CD4-positive, alpha-beta memory T cell (primary cell): ENCODE measurements at regions of chr16 and their contacts with region 1.

Region 1: GRCh38 chr16:70345840-70346239 is 863 bp upstream of the DDX19A start:
- DNase-seq: no peak
- H3K4me3 ChIP-seq: peak overlapping the region in 1 of 2 donors; percentile 93
- H3K4me3 Mint-ChIP-seq: peak overlapping the region; percentile 81 to 96 (median 94)
- H3K27ac ChIP-seq: peak overlapping the region; percentile 87
- H3K27ac Mint-ChIP-seq: peak overlapping the region; percentile 91 to 99 (median 99)
- H3K4me1 ChIP-seq: peaks cover 24% of the 10 kb centered on the region
- H3K4me1 Mint-ChIP-seq: peaks cover 16 to 44% (median 23%) of the 10 kb centered on the region in 4 donors
- H3K27me3 ChIP-seq: no peaks in the 10 kb centered on the region
- H3K27me3 Mint-ChIP-seq: no peaks in the 10 kb centered on the region

Region 2: DNA sequence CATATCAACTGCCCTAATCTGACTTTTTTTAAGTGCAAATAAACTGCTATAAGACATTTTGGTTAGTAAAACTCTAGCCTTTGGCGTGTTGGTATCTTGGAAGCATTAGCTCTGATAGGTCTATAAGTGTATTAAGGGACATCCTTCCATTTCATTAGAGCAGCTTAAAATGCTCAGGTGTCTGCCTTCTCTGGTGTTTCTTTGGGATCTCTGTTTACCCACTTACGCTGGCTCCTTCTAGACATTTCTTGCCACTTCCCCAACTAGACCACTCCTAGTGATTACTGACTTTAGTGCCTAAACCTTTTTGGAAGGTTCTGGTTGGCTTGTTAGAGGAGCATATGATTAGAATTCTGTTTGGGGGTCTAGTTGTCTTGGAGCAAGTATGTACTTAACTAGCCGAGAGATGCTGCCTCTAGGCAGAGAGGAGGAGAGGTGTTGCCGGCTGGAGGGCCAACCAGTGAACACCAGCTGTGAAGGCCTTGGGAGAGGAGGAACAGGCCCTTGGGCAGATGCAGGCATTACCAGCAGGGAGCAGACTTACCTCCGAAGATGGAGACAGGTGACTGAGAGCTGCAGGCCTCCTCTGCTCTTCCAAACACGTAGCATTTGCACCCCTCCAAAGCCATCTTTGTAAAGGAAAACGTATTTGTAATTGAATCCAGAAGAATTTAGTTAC is 187.4 kb before region 1 on chr16:
- CTCF ChIA-PET with region 1: no interaction called
- POLR2A ChIA-PET with region 1: no interaction called
- intact Hi-C with region 1: no loop called
- DNase-seq: no peak
- H3K4me3 ChIP-seq: no peak overlapping the region
- H3K4me3 Mint-ChIP-seq: no peak overlapping the region
- H3K27ac ChIP-seq: no peak overlapping the region
- H3K27ac Mint-ChIP-seq: no peak overlapping the region
- H3K4me1 ChIP-seq: no peaks in the 10 kb centered on the region
- H3K4me1 Mint-ChIP-seq: no peaks in the 10 kb centered on the region
- H3K27me3 ChIP-seq: no peaks in the 10 kb centered on the region
- H3K27me3 Mint-ChIP-seq: no peaks in the 10 kb centered on the region

Region 3: DNA sequence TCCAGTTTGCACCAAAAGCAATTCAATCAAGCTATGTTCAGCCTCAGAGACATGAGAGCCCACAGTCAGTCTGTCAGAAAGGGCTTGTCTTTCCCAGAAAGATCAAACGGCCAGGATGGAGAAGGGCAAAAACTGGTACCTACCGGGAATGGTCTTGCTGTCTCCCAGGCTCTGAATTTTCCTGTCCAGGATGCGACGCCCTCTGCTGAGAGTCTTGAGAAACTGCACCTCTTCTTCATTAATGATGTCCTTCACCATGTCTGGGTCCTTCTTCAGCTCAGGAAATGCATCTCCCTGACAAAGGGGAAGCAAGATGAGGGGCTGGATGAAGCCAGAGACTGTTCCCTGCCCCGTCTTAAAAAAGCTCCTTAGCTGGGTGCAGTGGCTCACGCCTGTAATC is 78.3 kb before region 1 on chr16:
- CTCF ChIA-PET with region 1: no interaction called
- POLR2A ChIA-PET with region 1: no interaction called
- intact Hi-C with region 1: no loop called
- DNase-seq: peak in 3 of 5 donors; percentile 26 to 31 (median 29)
- H3K4me3 ChIP-seq: no peak overlapping the region
- H3K4me3 Mint-ChIP-seq: no peak overlapping the region
- H3K27ac ChIP-seq: no peak overlapping the region
- H3K27ac Mint-ChIP-seq: peak overlapping the region in 1 of 7 donors; percentile 72
- H3K4me1 ChIP-seq: no peaks in the 10 kb centered on the region
- H3K4me1 Mint-ChIP-seq: peaks cover 0 to 1% (median 0%) of the 10 kb centered on the region in 4 donors
- H3K27me3 ChIP-seq: no peaks in the 10 kb centered on the region
- H3K27me3 Mint-ChIP-seq: no peaks in the 10 kb centered on the region

Region 4: GRCh38 chr16:70289229-70290098 is 56.4 kb before region 1 on chr16 and contains the start of gene AARS1:
- CTCF ChIA-PET with region 1: no interaction called
- POLR2A ChIA-PET with region 1: interaction called, 23 read pairs
- intact Hi-C with region 1: loop called (anchors 1 kb)
- DNase-seq: peak; percentile 95 to 97 (median 96)
- H3K4me3 ChIP-seq: peak within 1 kb of the TSS; percentile 49 to 76
- H3K4me3 Mint-ChIP-seq: peak within 1 kb of the TSS; percentile 96 to 99 (median 98)
- H3K27ac ChIP-seq: peak within 1 kb of the TSS; percentile 87
- H3K27ac Mint-ChIP-seq: peak within 1 kb of the TSS; percentile 90 to 99 (median 98)
- H3K4me1 ChIP-seq: peaks cover 10% of the 10 kb centered on the region
- H3K4me1 Mint-ChIP-seq: peaks cover 7 to 27% (median 20%) of the 10 kb centered on the region in 4 donors
- H3K27me3 ChIP-seq: no peaks in the 10 kb centered on the region
- H3K27me3 Mint-ChIP-seq: no peaks in the 10 kb centered on the region
- total RNA-seq, gene AARS1: 102 to 103 TPM

Region 5: GRCh38 chr16:70298988-70299938 is 46.6 kb before region 1 on chr16 and contains the start of gene DDX19B:
- CTCF ChIA-PET with region 1: no interaction called
- POLR2A ChIA-PET with region 1: interaction called, 62 read pairs
- intact Hi-C with region 1: loop called (anchors 1 kb)
- DNase-seq: peak; percentile 42 to 67 (median 57)
- H3K4me3 ChIP-seq: peak within 1 kb of the TSS; percentile 88 to 98
- H3K4me3 Mint-ChIP-seq: peak within 1 kb of the TSS; percentile 93 to 98 (median 96)
- H3K27ac ChIP-seq: peak within 1 kb of the TSS; percentile 93
- H3K27ac Mint-ChIP-seq: peak within 1 kb of the TSS; percentile 95 to 99 (median 99)
- H3K4me1 ChIP-seq: peaks cover 30% of the 10 kb centered on the region
- H3K4me1 Mint-ChIP-seq: peaks cover 26 to 49% (median 37%) of the 10 kb centered on the region in 4 donors
- H3K27me3 ChIP-seq: no peaks in the 10 kb centered on the region
- H3K27me3 Mint-ChIP-seq: no peaks in the 10 kb centered on the region
- total RNA-seq, gene DDX19B: 26.9 to 28.7 TPM

Region 6: DNA sequence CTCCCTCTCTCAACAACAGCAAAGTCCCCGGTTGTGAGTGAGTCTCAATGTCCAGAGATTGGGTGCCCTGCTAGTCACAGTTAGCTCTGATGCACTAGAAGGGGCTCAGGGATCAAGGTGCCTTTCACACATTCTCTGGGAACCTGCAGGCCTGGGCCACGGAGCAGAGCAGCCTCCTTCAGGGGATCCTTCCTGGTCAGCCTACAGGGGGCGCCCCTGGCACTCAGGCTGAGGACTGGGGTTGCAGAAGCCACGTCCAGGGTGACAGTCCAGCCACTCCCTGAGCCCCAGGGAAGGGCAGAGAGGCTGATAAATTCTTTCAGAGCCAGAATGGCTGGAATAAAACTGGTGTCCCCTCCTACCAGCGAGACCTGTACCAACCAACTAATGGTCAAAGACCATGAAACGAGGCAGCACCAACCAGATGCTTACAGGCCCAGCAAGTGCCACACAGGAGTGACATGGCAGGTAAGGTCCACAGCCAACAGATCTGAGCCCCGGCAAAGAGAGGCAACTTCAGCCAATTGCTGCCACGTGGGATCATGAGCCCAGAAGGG is 49.6 kb after region 1 on chr16:
- CTCF ChIA-PET with region 1: no interaction called
- POLR2A ChIA-PET with region 1: no interaction called
- intact Hi-C with region 1: no loop called
- DNase-seq: peak in 4 of 5 donors; percentile 48 to 50 (median 49)
- H3K4me3 ChIP-seq: no peak overlapping the region
- H3K4me3 Mint-ChIP-seq: no peak overlapping the region
- H3K27ac ChIP-seq: no peak overlapping the region
- H3K27ac Mint-ChIP-seq: peak overlapping the region in 2 of 7 donors; percentile 63 to 66
- H3K4me1 ChIP-seq: no peaks in the 10 kb centered on the region
- H3K4me1 Mint-ChIP-seq: peaks cover 0 to 2% (median under 1%) of the 10 kb centered on the region in 4 donors
- H3K27me3 ChIP-seq: no peaks in the 10 kb centered on the region
- H3K27me3 Mint-ChIP-seq: no peaks in the 10 kb centered on the region

Region 7: DNA sequence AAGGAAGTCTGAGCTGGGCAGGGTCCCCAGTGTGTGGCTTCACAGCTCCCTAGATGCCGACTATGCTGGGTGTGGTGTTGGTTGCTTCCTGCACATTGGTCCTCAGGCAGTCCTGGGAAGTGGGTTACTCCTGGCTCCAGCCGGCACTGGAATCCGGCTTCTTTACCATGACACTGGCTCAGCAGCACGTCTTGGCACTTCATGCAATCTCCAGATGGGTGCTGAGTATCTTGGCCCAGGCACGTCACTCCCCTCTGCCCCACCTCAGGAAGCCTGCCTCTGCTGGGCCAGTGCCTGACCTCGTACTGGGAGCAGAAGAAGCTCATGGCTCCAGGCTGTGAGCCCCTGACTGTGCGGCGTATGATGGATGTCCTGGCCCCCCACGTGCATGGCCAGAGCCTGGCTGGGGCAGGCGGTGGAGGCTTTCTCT is 133.1 kb after region 1 on chr16:
- CTCF ChIA-PET with region 1: no interaction called
- POLR2A ChIA-PET with region 1: no interaction called
- intact Hi-C with region 1: no loop called
- DNase-seq: no peak
- H3K4me3 ChIP-seq: no peak overlapping the region
- H3K4me3 Mint-ChIP-seq: no peak overlapping the region
- H3K27ac ChIP-seq: no peak overlapping the region
- H3K27ac Mint-ChIP-seq: peak overlapping the region in 3 of 7 donors; percentile 13 to 42 (median 36)
- H3K4me1 ChIP-seq: no peaks in the 10 kb centered on the region
- H3K4me1 Mint-ChIP-seq: peaks cover 0 to 9% (median under 1%) of the 10 kb centered on the region in 4 donors
- H3K27me3 ChIP-seq: no peaks in the 10 kb centered on the region
- H3K27me3 Mint-ChIP-seq: no peaks in the 10 kb centered on the region

Region 8: DNA sequence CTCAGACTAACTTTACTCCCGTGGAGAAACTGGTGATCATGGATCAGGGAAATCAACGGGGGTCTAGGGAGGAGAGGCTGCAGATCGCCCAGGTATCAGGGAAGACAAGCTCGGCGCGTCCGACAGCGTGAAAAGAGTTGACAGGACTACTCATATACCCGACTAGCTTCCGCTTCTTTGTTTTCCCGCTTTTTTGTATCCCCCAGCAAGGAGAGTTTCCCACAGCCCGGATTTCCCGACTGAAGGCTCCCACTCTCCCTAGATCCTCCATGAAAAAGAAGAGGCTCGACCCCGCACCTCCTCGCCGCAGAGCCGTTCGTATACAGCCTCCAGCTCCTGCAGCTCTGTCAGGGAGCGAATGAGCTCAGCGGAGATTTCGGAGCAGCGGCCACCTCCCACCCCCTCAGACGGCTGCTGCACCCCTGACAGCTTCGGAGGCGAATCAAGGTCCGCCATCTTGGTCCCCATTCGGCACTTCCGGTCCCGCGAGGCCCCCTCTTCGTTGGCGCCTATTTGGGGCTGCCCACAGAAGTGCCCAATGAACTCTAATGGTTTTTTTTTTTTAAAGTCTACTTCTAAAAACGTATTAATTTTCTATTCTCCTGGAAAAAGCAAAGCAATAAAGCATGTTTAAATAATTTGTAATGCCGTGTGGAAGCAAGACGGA is 177.4 kb after region 1 on chr16 and contains the start of gene COG4:
- CTCF ChIA-PET with region 1: no interaction called
- POLR2A ChIA-PET with region 1: interaction called, 23 read pairs
- intact Hi-C with region 1: loop called (anchors 1 kb)
- DNase-seq: peak; percentile 90 to 94 (median 91)
- H3K4me3 ChIP-seq: peak within 1 kb of the TSS; percentile 90 to 97
- H3K4me3 Mint-ChIP-seq: peak within 1 kb of the TSS; percentile 96 to 99 (median 98)
- H3K27ac ChIP-seq: peak within 1 kb of the TSS; percentile 86
- H3K27ac Mint-ChIP-seq: peak within 1 kb of the TSS; percentile 97 to 100 (median 99)
- H3K4me1 ChIP-seq: peaks cover 64% of the 10 kb centered on the region
- H3K4me1 Mint-ChIP-seq: peaks cover 35 to 75% (median 54%) of the 10 kb centered on the region in 4 donors
- H3K27me3 ChIP-seq: no peaks in the 10 kb centered on the region
- H3K27me3 Mint-ChIP-seq: no peaks in the 10 kb centered on the region
- total RNA-seq, gene COG4: 66.5 to 68.9 TPM